ENCODE measurements at regions of chr3 and their contacts with region 1.

Region 1: DNA sequence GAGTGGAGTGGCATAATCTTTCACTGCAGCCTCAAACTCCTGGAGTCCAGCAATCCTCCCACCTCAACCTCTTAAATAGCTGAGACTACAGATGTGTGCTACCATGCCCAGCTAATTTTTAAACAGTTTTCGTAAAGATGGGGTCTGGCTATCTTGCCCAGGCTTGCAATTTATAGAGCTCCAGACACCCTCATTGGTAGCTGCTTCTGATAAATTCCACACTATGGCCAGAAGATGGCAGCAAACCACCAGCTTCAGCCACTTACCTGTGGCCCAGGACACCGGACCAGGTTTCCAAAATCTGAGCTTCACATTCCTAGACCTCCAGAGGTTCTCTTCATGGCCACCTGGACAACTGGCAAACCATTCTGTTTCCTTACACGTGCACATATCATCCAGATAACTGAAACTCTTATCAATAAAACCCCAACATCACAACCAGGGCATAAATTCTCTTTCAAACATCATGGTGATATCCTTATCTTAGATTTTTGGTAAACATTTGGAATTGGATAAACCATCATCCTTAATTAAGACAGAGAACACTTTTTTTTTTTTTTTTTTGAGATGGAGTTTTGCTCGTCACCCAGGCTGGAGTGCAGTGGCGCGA is 28.9 kb downstream of the FBXW12 start:
- DNase-seq: peak; percentile 73
- ATAC-seq: peak; percentile 87
- H3K4me3 Mint-ChIP-seq: no peak overlapping the region
- H3K27ac Mint-ChIP-seq: no peak overlapping the region
- H3K4me1 Mint-ChIP-seq: no peaks in the 10 kb centered on the region
- H3K27me3 Mint-ChIP-seq: peaks cover 2% of the 10 kb centered on the region
- CTCF ChIP-seq: peak; percentile 90

Region 2: GRCh38 chr3:48077815-48078214 is 323.1 kb before region 1 on chr3:
- CTCF ChIA-PET with region 1: no interaction called
- POLR2A ChIA-PET with region 1: no interaction called
- intact Hi-C with region 1: no loop called
- DNase-seq: no peak
- ATAC-seq: no peak
- H3K4me3 Mint-ChIP-seq: no peak overlapping the region
- H3K27ac Mint-ChIP-seq: no peak overlapping the region
- H3K4me1 Mint-ChIP-seq: peaks cover 5% of the 10 kb centered on the region
- H3K27me3 Mint-ChIP-seq: no peaks in the 10 kb centered on the region
- CTCF ChIP-seq: no peak

Region 3: DNA sequence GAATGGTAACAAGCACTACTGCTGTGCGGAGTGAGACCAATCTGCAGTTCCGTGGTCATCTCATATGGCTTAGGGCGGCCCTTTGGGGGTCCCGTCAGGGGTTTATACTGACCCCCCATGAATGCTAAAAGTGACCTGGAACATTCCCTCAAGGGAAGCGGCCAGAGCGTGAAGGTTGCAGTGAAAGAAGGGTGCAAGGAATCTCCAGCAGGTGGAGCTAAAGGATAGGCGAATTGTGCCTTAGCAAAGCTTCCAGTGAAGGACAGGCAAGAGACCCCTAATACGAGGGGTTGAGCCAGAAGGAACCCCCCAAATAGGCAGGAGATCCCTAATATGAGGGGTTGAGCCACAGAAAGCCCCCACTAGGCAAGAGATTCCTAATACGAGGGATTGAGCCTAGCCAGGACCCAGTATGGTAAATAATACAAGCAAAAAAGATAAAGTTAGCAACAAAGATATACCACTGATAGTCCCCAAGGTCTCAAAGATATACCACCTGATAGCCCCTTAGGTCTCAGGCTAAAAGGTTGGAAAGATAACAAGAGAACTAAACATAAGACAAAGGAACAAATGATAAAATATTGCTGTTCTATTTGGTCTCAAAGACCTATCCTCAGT is 127.2 kb before region 1 on chr3:
- CTCF ChIA-PET with region 1: interaction called, 31 read pairs
- POLR2A ChIA-PET with region 1: interaction called, 3 read pairs
- intact Hi-C with region 1: loop called (anchors 10 kb)
- DNase-seq: peak; percentile 67
- ATAC-seq: peak; percentile 24
- H3K4me3 Mint-ChIP-seq: no peak overlapping the region
- H3K27ac Mint-ChIP-seq: no peak overlapping the region
- H3K4me1 Mint-ChIP-seq: peaks cover 23% of the 10 kb centered on the region
- H3K27me3 Mint-ChIP-seq: no peaks in the 10 kb centered on the region
- CTCF ChIP-seq: peak; percentile 79

Region 4: GRCh38 chr3:48306860-48307530 is 93.9 kb before region 1 on chr3:
- CTCF ChIA-PET with region 1: interaction called, 19 read pairs
- POLR2A ChIA-PET with region 1: no interaction called
- intact Hi-C with region 1: no loop called
- DNase-seq: no peak
- ATAC-seq: no peak
- H3K4me3 Mint-ChIP-seq: no peak overlapping the region
- H3K27ac Mint-ChIP-seq: no peak overlapping the region
- H3K4me1 Mint-ChIP-seq: peaks cover 4% of the 10 kb centered on the region
- H3K27me3 Mint-ChIP-seq: peaks cover 11% of the 10 kb centered on the region
- CTCF ChIP-seq: no peak

Region 5: GRCh38 chr3:48428088-48428829 is 27.3 kb after region 1 on chr3:
- CTCF ChIA-PET with region 1: interaction called, 312 read pairs
- POLR2A ChIA-PET with region 1: interaction called, 3 read pairs
- intact Hi-C with region 1: no loop called
- DNase-seq: no peak
- ATAC-seq: no peak
- H3K4me3 Mint-ChIP-seq: peak overlapping the region; percentile 25
- H3K27ac Mint-ChIP-seq: no peak overlapping the region
- H3K4me1 Mint-ChIP-seq: peaks cover 4% of the 10 kb centered on the region
- H3K27me3 Mint-ChIP-seq: peaks cover 6% of the 10 kb centered on the region
- CTCF ChIP-seq: no peak

Region 6: DNA sequence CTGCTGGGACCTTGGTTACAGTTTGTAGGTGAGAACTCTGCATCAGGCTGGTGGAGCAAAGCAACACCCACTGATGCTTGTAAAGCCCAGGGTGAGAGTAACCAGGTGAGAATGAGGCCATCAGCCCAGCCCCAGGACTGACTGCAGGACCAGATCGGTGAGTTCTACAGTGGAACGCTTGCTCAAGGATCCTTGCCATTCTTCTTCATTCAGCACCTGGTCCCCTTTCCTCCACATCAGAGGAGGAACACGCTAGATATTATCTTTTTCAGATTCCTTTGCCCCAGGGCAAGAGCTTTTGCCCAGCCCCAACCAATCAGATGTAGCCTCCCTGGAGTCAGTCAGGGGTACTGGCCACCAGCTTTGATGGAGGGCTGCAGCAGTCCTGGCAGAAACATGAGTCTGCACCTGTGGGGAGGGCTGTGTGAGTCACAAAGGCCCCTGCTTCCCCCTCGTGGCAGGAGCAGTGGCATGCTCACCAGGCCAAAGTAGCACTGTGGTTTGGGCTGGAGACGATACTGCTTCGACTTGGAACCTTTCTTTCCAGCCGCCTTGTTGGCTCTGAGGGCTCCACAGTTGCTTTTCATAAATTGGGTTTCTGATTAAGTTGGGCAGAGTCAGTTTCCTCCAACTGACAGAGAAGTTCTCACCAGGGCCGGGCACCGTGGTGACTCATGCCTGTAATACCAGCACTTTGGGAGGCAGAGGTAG is 106.6 kb after region 1 on chr3:
- CTCF ChIA-PET with region 1: interaction called, 15 read pairs
- POLR2A ChIA-PET with region 1: interaction called, 4 read pairs
- intact Hi-C with region 1: no loop called
- DNase-seq: peak; percentile 88
- ATAC-seq: peak; percentile 87
- H3K4me3 Mint-ChIP-seq: no peak overlapping the region
- H3K27ac Mint-ChIP-seq: peak overlapping the region; percentile 49
- H3K4me1 Mint-ChIP-seq: peaks cover 36% of the 10 kb centered on the region
- H3K27me3 Mint-ChIP-seq: no peaks in the 10 kb centered on the region
- CTCF ChIP-seq: peak; percentile 57

Region 7: GRCh38 chr3:48548729-48549705 is 148.1 kb after region 1 on chr3:
- CTCF ChIA-PET with region 1: interaction called, 54 read pairs
- POLR2A ChIA-PET with region 1: no interaction called
- intact Hi-C with region 1: loop called (anchors 5 kb)
- DNase-seq: peak; percentile 89
- ATAC-seq: peak; percentile 98
- H3K4me3 Mint-ChIP-seq: no peak overlapping the region
- H3K27ac Mint-ChIP-seq: no peak overlapping the region
- H3K4me1 Mint-ChIP-seq: peaks cover 8% of the 10 kb centered on the region
- H3K27me3 Mint-ChIP-seq: no peaks in the 10 kb centered on the region
- CTCF ChIP-seq: peak; percentile 92

Region 8: GRCh38 chr3:48635222-48636021 is 234.5 kb after region 1 on chr3 and contains the start of gene SLC26A6:
- CTCF ChIA-PET with region 1: interaction called, 11 read pairs
- POLR2A ChIA-PET with region 1: no interaction called
- intact Hi-C with region 1: no loop called
- DNase-seq: peak; percentile 96
- ATAC-seq: peak; percentile 95
- H3K4me3 Mint-ChIP-seq: peak within 1 kb of the TSS; percentile 88
- H3K27ac Mint-ChIP-seq: peak within 1 kb of the TSS; percentile 87
- H3K4me1 Mint-ChIP-seq: peaks cover 21% of the 10 kb centered on the region
- H3K27me3 Mint-ChIP-seq: no peaks in the 10 kb centered on the region
- CTCF ChIP-seq: peak; percentile 71
- total RNA-seq, gene SLC26A6: 41.3 to 45.0 TPM

Region 9: DNA sequence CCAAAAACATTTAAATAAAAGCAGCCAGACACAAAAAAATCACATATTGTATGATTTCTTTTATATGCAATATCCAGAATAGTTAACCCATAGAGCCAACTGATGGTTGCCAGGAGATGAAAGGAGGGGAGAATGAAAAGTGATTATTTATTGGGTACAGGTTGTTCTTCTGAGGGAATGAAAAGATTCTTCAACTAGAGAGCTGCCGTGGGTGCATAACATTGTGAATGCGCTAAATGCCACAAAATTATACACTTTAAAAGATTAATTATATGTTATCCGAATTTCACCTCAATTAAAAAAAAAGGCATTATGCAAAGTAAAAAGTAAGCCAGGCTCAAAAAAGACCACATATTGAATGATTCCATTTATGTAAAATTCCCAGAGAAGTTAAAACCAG is 410.6 kb after region 1 on chr3:
- CTCF ChIA-PET with region 1: no interaction called
- POLR2A ChIA-PET with region 1: no interaction called
- intact Hi-C with region 1: no loop called
- DNase-seq: no peak
- ATAC-seq: no peak
- H3K4me3 Mint-ChIP-seq: no peak overlapping the region
- H3K27ac Mint-ChIP-seq: peak overlapping the region; percentile 87
- H3K4me1 Mint-ChIP-seq: peaks cover 33% of the 10 kb centered on the region
- H3K27me3 Mint-ChIP-seq: no peaks in the 10 kb centered on the region
- CTCF ChIP-seq: no peak

Measured in activated CD8-positive, alpha-beta T cell treated with anti-CD3 and anti-CD28 coated beads for 36 hours (primary cell).